ENCODE measurements at regions of chr6 and their contacts with region 1.

Region 1: DNA sequence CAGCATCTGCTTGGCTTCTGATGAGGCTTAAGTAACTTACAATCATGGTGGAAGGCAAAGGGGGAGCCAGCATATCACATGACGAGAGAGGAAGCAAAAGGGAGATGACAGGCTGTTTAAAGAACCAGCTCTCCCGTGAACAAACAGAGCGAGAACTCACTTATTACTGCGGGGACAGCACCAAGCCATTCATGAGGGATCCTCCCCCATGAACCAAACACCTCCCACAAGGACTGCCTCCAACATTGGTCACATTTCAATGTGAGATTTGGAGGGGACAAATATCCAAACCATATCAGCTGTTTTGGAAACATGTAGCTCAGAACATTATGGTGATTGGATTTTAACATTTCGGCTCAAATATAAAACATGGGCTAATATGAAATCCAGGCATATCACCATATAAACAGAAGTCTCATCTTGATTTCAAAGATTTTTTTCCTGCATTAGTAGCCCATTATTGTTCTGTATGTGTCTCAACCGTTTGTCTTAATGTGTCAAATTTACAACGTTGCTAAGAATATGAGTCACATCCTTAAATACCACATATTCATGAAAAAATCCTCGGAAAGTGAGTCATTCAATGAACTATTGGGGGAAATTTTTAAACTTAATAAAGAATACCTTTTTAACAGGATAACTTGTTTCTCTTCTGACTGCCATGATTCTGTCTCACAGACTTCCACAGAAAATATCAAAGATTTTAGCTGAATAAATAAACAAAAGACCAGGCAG is 894.3 kb downstream of the TFAP2A start:
- DNase-seq: peak; percentile 25
- ATAC-seq: peak; percentile 87
- H3K4me3 ChIP-seq: no peak overlapping the region
- H3K27ac ChIP-seq: peak overlapping the region; percentile 50; the same call in 1 of the 2 replicates
- H3K4me1 ChIP-seq: no peaks in the 10 kb centered on the region
- H3K27me3 ChIP-seq: no peaks in the 10 kb centered on the region
- CTCF ChIP-seq: no peak
- EP300 ChIP-seq: peak in 1 of 2 experiments; percentile 38; a peak in 3 of 4 replicates
- POLR2A ChIP-seq: no peak
- RAD21 ChIP-seq: no peak

Region 2: DNA sequence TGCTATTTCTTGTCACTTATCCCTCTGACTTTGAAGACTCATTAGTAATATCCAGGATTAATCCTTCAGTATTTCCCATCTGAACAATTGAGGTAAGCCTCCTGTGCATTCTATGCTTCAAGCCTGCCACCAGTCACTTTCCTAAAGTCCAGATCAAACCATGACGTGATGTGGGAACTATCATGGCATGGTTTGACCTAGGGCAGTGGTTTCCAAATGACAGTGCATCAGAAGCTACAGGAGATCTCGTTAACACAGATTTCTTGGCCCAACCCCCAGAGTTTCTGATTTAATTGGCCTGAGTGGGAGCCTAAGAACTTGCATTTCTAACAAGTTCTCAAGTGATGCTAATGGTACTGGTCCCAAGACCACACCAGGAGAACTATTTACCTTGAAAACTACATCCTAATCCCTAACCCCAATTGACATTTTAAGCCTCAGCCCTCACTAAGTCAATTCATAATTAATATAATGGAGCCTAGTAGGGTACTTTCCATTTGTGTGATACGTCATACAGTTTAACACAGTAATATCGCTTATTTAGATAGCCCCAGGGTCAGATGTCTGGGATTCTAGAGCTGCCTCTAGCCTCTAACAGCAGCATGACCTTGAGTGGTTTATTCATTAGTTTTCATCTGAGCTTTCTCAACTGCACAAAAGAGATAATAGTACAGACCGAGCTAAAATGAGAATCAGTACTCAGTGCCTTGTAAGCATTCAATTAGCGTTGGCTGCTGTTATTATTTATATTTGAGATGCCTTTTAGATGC is 13.3 kb before region 1 on chr6:
- CTCF ChIA-PET with region 1: interaction called, 11 read pairs
- POLR2A ChIA-PET with region 1: interaction called, 5 read pairs
- RAD21 ChIA-PET with region 1: interaction called, 7 read pairs
- SMC1A ChIA-PET with region 1: interaction called, 6 read pairs
- in situ Hi-C with region 1: no loop called
- intact Hi-C with region 1: loop called (anchors 2 kb)
- DNase-seq: peak; percentile 19
- ATAC-seq: peak; percentile 87
- H3K4me3 ChIP-seq: no peak overlapping the region
- H3K27ac ChIP-seq: no peak overlapping the region
- H3K4me1 ChIP-seq: no peaks in the 10 kb centered on the region; the same call in 1 of the 2 replicates
- H3K27me3 ChIP-seq: no peaks in the 10 kb centered on the region
- CTCF ChIP-seq: no peak
- EP300 ChIP-seq: no peak
- POLR2A ChIP-seq: no peak
- RAD21 ChIP-seq: no peak

Region 3: GRCh38 chr6:9540534-9541126 is 20.0 kb after region 1 on chr6:
- CTCF ChIA-PET with region 1: interaction called, 4 read pairs
- POLR2A ChIA-PET with region 1: interaction called, 4 read pairs
- RAD21 ChIA-PET with region 1: interaction called, 4 read pairs
- SMC1A ChIA-PET with region 1: interaction called, 43 read pairs
- in situ Hi-C with region 1: no loop called
- intact Hi-C with region 1: no loop called
- DNase-seq: no peak
- ATAC-seq: peak; percentile 82
- H3K4me3 ChIP-seq: no peak overlapping the region
- H3K27ac ChIP-seq: no peak overlapping the region
- H3K4me1 ChIP-seq: no peaks in the 10 kb centered on the region
- H3K27me3 ChIP-seq: no peaks in the 10 kb centered on the region
- CTCF ChIP-seq: peak; percentile 57 to 62 (median 61)
- EP300 ChIP-seq: no peak
- POLR2A ChIP-seq: no peak
- RAD21 ChIP-seq: peak; percentile 59

Region 4: GRCh38 chr6:9810276-9810675 is 289.7 kb after region 1 on chr6:
- CTCF ChIA-PET with region 1: no interaction called
- POLR2A ChIA-PET with region 1: no interaction called
- RAD21 ChIA-PET with region 1: no interaction called
- SMC1A ChIA-PET with region 1: no interaction called
- in situ Hi-C with region 1: no loop called
- intact Hi-C with region 1: no loop called
- DNase-seq: no peak
- ATAC-seq: no peak
- H3K4me3 ChIP-seq: no peak overlapping the region
- H3K27ac ChIP-seq: no peak overlapping the region
- H3K4me1 ChIP-seq: no peaks in the 10 kb centered on the region
- H3K27me3 ChIP-seq: no peaks in the 10 kb centered on the region
- CTCF ChIP-seq: no peak
- EP300 ChIP-seq: no peak
- POLR2A ChIP-seq: no peak
- RAD21 ChIP-seq: no peak

Measured in GM12878 (cell line).